Activated CD4-positive, alpha-beta memory T cell treated with anti-CD3 and anti-CD28 coated beads for 36 hours (primary cell): ENCODE measurements at regions of chr4 and their contacts with region 1.

Region 1: GRCh38 chr4:76949276-76950051 is at the start of gene SEPTIN11:
- DNase-seq: peak; percentile 84
- H3K4me3 Mint-ChIP-seq: peak within 1 kb of the TSS; percentile 81
- H3K27ac Mint-ChIP-seq: peak within 1 kb of the TSS; percentile 51
- H3K4me1 Mint-ChIP-seq: peaks cover 12% of the 10 kb centered on the region
- H3K27me3 Mint-ChIP-seq: peaks cover 18% of the 10 kb centered on the region
- total RNA-seq, gene SEPTIN11: 28.3 to 33.6 TPM

Region 2: DNA sequence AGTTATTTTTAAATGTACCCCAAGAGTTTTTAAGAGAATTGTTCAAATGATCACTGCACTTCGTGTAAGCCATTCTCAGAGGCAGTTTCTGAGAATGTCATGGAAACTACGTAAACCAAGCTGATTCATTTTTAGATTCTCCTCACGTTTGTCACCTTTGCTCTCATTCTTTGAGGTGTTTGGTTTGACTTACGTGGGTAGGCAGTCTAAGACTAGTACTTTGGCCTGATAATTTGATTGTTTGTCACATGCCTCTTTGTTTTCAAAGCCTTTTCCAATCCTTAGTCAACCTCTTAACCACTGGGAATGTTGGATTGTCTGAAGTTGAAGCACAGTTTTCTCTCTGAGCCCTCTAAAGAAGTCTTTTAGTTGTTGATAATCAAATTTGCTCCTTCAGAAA is 10.6 kb after region 1 on chr4:
- CTCF ChIA-PET with region 1: no interaction called
- POLR2A ChIA-PET with region 1: interaction called, 3 read pairs
- intact Hi-C with region 1: loop called (anchors 1 kb)
- DNase-seq: no peak
- H3K4me3 Mint-ChIP-seq: no peak overlapping the region
- H3K27ac Mint-ChIP-seq: no peak overlapping the region
- H3K4me1 Mint-ChIP-seq: peaks cover 16% of the 10 kb centered on the region
- H3K27me3 Mint-ChIP-seq: no peaks in the 10 kb centered on the region

Region 3: DNA sequence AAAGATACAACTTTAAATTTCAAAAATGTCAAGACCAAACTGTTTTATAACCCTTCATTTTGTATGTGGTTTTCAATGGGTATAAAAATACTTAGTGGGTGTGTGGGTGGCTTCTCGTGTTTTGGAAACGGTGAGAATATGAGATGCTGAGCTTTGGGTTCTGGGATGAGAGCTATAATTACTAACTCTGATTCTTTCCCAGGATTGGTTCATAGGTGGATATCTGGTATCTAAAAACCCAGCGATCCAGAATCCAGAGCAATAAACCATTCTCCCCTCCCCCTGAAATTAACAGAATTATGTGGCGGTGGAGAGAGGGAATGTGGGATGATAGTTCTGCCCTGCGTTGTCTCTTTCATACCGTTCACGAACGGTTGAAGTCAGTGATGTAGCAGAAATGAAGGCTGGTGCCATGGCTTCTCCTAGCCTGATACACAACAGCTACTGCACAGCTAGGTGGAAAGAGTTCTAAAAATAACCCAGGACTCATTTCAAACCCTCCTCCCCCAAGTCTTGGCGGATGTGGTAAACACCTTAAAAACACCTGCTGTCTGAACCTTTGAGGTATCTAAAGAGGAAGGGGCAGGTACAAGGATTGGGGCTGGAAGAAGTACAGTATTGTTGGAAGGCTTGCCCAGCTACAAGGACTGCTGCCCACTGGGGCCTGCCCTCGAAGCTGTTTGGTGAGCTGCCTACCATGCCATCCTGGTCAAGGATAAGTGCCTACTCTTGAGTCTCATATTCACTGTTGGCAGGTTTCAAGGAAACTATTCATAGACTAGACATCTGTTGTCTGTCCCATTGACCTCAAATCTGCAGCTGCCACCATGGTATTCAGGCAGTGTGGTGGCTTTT is 44.5 kb after region 1 on chr4:
- CTCF ChIA-PET with region 1: no interaction called
- POLR2A ChIA-PET with region 1: interaction called, 3 read pairs
- intact Hi-C with region 1: loop called (anchors 1 kb)
- DNase-seq: peak; percentile 73
- H3K4me3 Mint-ChIP-seq: peak overlapping the region; percentile 11
- H3K27ac Mint-ChIP-seq: no peak overlapping the region
- H3K4me1 Mint-ChIP-seq: peaks cover 53% of the 10 kb centered on the region
- H3K27me3 Mint-ChIP-seq: peaks cover 5% of the 10 kb centered on the region

Region 4: DNA sequence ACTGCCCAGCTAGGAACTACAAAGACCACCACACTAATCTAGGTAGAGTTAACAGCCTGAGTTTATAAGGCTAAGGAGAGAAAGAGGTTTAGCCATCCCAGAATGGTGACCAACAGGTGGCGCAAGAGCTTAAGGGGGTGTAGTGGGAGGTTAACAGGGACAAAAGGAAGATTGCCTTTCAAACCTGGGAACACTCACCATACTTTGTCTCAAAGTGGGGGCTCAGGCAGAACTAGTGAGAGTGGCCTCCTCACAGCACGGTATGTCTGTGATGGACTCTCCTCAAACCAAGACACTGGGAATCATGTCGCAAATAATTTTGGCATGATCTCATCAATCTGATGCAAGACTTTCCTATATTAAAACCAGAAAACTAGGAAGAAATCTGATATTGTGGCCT is 102.9 kb after region 1 on chr4:
- CTCF ChIA-PET with region 1: no interaction called
- POLR2A ChIA-PET with region 1: no interaction called
- intact Hi-C with region 1: no loop called
- DNase-seq: peak; percentile 69
- H3K4me3 Mint-ChIP-seq: no peak overlapping the region
- H3K27ac Mint-ChIP-seq: peak overlapping the region; percentile 34
- H3K4me1 Mint-ChIP-seq: no peaks in the 10 kb centered on the region
- H3K27me3 Mint-ChIP-seq: no peaks in the 10 kb centered on the region

Region 5: GRCh38 chr4:77156533-77156911 is 207.1 kb after region 1 on chr4:
- CTCF ChIA-PET with region 1: no interaction called
- POLR2A ChIA-PET with region 1: no interaction called
- intact Hi-C with region 1: loop called (anchors 2 kb)
- DNase-seq: peak; percentile 97
- H3K4me3 Mint-ChIP-seq: peak overlapping the region; percentile 95
- H3K27ac Mint-ChIP-seq: peak overlapping the region; percentile 94
- H3K4me1 Mint-ChIP-seq: peaks cover 27% of the 10 kb centered on the region
- H3K27me3 Mint-ChIP-seq: no peaks in the 10 kb centered on the region